PC-9 (cell line): ENCODE measurements at regions of chr16 and their contacts with region 1.

Region 1: DNA sequence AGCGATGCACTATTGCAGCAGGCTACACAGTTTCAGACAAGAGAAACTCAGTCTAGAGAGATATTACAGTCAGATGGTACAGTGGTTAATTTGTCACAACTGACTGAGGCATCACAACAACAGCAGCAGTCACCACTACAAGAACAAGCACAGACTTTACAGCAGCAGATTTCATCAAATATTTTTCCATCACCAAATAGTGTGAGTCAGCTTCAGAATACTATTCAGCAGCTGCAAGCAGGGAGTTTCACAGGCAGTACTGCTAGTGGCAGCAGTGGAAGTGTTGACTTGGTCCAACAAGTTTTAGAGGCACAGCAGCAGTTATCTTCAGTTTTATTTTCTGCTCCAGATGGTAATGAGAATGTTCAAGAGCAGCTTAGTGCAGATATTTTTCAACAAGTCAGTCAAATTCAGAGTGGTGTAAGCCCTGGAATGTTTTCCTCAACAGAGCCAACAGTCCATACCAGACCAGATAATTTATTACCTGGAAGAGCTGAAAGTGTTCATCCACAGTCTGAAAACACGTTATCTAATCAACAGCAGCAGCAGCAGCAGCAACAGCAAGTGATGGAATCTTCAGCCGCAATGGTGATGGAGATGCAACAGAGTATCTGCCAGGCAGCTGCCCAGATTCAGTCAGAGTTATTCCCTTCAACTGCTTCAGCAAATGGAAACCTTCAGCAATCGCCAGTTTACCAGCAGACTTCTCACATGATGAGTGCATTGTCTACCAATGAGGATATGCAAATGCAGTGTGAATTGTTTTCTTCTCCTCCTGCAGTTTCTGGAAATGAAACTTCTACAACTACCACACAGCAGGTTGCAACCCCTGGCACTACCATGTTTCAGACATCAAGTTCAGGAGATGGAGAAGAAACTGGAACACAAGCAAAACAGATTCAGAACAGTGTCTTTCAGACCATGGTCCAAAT is 34.1 kb downstream of the NQO1 start:
- DNase-seq: no peak
- H3K4me3 ChIP-seq: no peak overlapping the region
- H3K27ac ChIP-seq: no peak overlapping the region
- H3K4me1 ChIP-seq: no peaks in the 10 kb centered on the region
- H3K27me3 ChIP-seq: no peaks in the 10 kb centered on the region
- CTCF ChIP-seq: no peak

Region 2: DNA sequence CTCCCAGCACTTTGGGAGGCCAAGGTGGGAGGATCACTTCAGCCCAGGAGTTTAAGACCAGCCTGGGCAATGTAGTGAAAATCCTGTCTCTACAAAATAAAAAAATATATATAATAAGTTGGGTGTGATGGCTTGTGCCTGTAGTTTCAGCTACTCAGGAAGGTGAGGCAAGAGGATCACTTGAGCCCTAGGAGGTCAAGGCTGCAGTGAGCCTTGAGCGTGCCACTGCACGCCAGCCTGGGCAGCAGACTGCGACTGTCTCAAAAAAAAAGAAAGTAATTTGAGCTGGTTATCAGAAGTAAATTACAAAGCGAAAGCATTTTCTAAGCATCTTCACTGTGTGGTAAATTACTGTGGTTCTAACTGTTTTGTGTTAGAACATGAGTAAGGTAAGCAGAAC is 32.1 kb before region 1 on chr16:
- CTCF ChIA-PET with region 1: no interaction called
- POLR2A ChIA-PET with region 1: no interaction called
- intact Hi-C with region 1: loop called (anchors 5 kb)
- DNase-seq: no peak
- H3K4me3 ChIP-seq: no peak overlapping the region
- H3K27ac ChIP-seq: no peak overlapping the region
- H3K4me1 ChIP-seq: no peaks in the 10 kb centered on the region
- H3K27me3 ChIP-seq: no peaks in the 10 kb centered on the region
- CTCF ChIP-seq: no peak

Region 3: GRCh38 chr16:69904495-69905170 is 212.4 kb after region 1 on chr16:
- CTCF ChIA-PET with region 1: no interaction called
- POLR2A ChIA-PET with region 1: no interaction called
- intact Hi-C with region 1: no loop called
- DNase-seq: no peak
- H3K4me3 ChIP-seq: no peak overlapping the region
- H3K27ac ChIP-seq: no peak overlapping the region
- H3K4me1 ChIP-seq: no peaks in the 10 kb centered on the region
- H3K27me3 ChIP-seq: no peaks in the 10 kb centered on the region
- CTCF ChIP-seq: no peak